ENCODE measurements at regions of chr6 and their contacts with region 1.

Region 1: DNA sequence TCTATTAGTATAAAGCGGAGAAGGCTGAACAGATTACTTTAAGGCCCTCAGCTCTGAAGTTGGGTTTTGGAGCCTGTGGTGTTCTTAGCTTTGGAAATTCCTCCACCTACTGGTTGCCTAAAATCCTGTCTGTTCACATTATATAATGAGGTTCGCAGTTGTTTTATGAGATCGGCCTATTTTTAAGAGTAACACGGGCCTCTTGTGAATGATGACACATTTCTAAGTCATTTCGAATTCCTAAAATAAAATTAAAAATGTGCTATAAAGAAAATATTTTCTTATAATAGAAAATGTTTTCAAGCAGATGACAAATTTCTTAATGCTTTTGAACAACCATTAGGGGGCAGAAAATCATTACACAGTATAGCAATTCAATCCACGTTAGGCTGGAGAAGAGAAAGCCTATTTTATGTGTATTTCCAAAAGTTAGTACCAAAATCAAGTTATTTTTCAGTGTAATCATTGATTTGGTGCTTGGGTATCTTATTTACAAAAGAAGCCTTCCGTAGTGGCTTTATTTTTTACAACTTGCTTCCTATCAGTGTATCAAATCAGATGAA is 15.8 kb upstream of the FAM8A1 start:
- DNase-seq: no peak
- ATAC-seq: peak; percentile 93
- H3K4me3 ChIP-seq: no peak overlapping the region
- H3K27ac ChIP-seq: peak overlapping the region in 1 of 2 donors; percentile 57
- H3K4me1 ChIP-seq: no peaks in the 10 kb centered on the region
- H3K27me3 ChIP-seq: no peaks in the 10 kb centered on the region

Region 2: DNA sequence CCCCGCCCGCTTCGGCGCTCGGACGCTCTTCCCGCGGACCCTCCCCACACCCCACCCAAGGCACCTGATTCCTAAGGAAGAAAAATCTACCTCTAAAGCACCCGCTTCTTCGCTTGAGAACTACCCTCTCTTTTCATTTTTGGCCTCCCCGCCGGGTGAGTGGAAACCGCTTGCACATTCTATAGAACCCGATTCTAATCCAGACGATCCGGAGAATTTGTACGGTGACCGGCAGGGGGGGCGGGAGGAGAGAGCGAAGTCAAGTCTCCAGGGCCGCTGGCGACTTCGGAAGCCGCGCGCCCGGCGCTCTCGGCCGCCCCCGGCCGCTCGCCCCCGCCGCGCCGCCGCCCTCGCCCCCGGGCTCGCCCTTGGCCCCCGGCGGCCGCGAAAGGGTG is 303.2 kb before region 1 on chr6 and contains the start of gene RBM24:
- intact Hi-C with region 1: loop called (anchors 5 kb)
- DNase-seq: peak; percentile 76 to 93
- ATAC-seq: peak; percentile 70
- H3K4me3 ChIP-seq: peak within 1 kb of the TSS; percentile 48 to 84
- H3K27ac ChIP-seq: no peak within 1 kb of the TSS
- H3K4me1 ChIP-seq: no peaks in the 10 kb centered on the region
- H3K27me3 ChIP-seq: no peaks in the 10 kb centered on the region
- total RNA-seq, gene RBM24: 2.5 to 6.1 TPM

Region 3: GRCh38 chr6:17808609-17809008 is 224.3 kb after region 1 on chr6:
- intact Hi-C with region 1: loop called in 1 of 2 experiments (anchors 2 kb)
- DNase-seq: no peak
- ATAC-seq: no peak
- H3K4me3 ChIP-seq: no peak overlapping the region
- H3K27ac ChIP-seq: no peak overlapping the region
- H3K4me1 ChIP-seq: no peaks in the 10 kb centered on the region
- H3K27me3 ChIP-seq: no peaks in the 10 kb centered on the region